Stomach (tissue), 19 donors: ENCODE measurements at regions of chr11 and their contacts with region 1.

Region 1: DNA sequence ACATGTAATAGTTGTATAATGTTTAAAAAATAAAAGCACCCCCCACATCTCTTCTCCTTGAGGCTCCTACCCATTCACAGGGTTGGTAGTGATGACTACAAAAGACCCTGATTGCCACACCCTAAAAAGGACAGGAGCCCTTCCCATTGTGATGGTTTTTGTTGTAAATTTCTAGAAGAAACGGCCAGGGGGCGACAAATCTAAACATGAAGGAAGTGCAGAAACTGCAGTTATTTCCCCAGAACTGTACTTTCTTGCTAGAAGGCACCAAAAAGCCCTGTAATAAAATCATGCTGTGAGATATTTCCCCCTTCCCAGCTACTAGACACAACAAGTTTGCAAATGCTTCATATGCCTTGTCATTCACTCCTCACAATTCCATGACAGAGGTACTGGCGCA is 10.8 kb downstream of the PRR5L start:
- DNase-seq: peak in 1 of 2 donors; percentile 54
- H3K4me3 ChIP-seq: no peak overlapping the region
- H3K27ac ChIP-seq: no peak overlapping the region
- H3K4me1 ChIP-seq: no peaks in the 10 kb centered on the region
- H3K27me3 ChIP-seq: no peaks in the 10 kb centered on the region
- CTCF ChIP-seq: peak in 3 of 7 experiments; percentile 7 to 10 (median 8)
- EP300 ChIP-seq: no peak
- POLR2A ChIP-seq: no peak

Region 2: GRCh38 chr11:36361901-36362391 is 55.1 kb after region 1 on chr11:
- intact Hi-C with region 1: loop called (anchors 10 kb)
- DNase-seq: peak in 1 of 2 donors; percentile 71
- H3K4me3 ChIP-seq: peak overlapping the region in 1 of 4 donors; percentile 7
- H3K27ac ChIP-seq: peak overlapping the region in 1 of 5 donors; percentile 9
- H3K4me1 ChIP-seq: peaks cover 0 to 19% (median 8%) of the 10 kb centered on the region in 4 donors
- H3K27me3 ChIP-seq: no peaks in the 10 kb centered on the region
- CTCF ChIP-seq: no peak
- EP300 ChIP-seq: no peak
- POLR2A ChIP-seq: no peak

Region 3: GRCh38 chr11:36478700-36479329 is 171.9 kb after region 1 on chr11:
- intact Hi-C with region 1: loop called (anchors 10 kb)
- DNase-seq: peak in 1 of 2 donors; percentile 84
- H3K4me3 ChIP-seq: no peak overlapping the region
- H3K27ac ChIP-seq: no peak overlapping the region
- H3K4me1 ChIP-seq: no peaks in the 10 kb centered on the region
- H3K27me3 ChIP-seq: no peaks in the 10 kb centered on the region
- CTCF ChIP-seq: peak in 3 of 7 experiments; percentile 21 to 45 (median 39)
- EP300 ChIP-seq: no peak
- POLR2A ChIP-seq: no peak